ENCODE measurements at regions of chr16 and their contacts with region 1.

Region 1: GRCh38 chr16:20221215-20221614 is 106.1 kb downstream of the GP2 start:
- DNase-seq: no peak
- ATAC-seq: no peak
- H3K4me3 ChIP-seq: no peak overlapping the region
- H3K27ac ChIP-seq: no peak overlapping the region
- H3K4me1 ChIP-seq: no peaks in the 10 kb centered on the region
- H3K27me3 ChIP-seq: no peaks in the 10 kb centered on the region

Region 2: DNA sequence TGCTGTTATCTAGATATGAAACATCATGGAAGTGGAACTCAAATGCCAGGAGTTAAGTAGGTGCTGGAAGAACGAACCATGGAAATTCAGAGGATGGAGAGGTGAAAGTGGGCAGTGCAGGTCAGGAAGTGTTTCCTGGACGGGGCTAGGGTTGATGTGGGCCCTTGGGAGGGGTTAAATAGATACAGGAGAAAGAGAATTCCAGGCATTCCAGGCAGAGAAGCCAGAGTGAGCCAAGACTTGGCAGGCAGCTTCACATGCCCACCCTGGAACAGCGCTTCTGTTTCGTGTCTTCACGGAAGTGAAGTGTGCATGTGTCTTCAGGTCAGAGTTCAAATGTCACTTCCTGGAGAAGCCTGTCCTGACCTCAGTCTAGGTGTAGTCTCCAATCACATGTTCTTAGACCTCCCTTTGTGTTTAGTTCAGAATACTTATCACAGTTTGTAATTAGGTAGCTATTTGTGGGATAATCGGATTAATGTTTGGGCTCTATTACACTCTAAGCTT is 64.8 kb after region 1 on chr16:
- intact Hi-C with region 1: loop called in 1 of 2 experiments (anchors 10 kb)
- DNase-seq: no peak
- ATAC-seq: no peak
- H3K4me3 ChIP-seq: no peak overlapping the region
- H3K27ac ChIP-seq: no peak overlapping the region
- H3K4me1 ChIP-seq: no peaks in the 10 kb centered on the region
- H3K27me3 ChIP-seq: peaks cover 0 to 1% of the 10 kb centered on the region in 2 donors